Spleen (tissue), 13 donors: ENCODE measurements at regions of chr3 and their contacts with region 1.

Region 1: DNA sequence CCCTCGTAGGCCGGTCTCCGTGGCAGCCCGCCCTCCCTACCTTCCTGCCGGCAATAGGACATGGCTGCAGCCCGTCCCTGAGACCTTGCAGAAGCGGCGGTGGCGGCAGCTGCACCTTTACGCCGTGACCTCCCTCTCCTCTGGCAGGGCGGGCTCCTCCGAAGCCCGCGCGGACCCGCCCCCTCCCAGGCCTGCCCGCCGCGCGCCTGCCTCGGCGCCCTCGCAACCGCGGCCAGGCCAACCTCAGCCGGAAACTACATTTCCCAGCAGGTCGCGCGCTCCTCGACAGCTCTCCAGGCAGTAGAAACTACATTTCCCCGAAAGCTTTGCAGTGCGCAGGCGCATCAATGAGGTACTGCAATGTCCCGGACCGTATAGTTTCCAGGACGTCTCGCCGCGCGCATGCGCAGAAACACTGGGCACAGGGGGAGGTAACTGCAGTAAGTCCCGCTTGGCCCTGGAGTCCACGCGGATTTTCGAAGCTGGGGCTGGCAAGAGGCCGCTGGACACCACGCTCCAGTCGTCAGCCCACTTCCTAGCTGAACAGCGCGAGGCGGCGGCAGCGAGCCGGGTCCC is at the starts of genes CHCHD4 and TMEM43:
- DNase-seq: peak; percentile 100
- H3K4me3 ChIP-seq: peak within 1 kb of the TSS; percentile 84 to 98 (median 94)
- H3K27ac ChIP-seq: peak within 1 kb of the TSS; percentile 66 to 96 (median 92)
- H3K4me1 ChIP-seq: peaks cover 22 to 51% (median 47%) of the 10 kb centered on the region in 6 donors
- H3K27me3 ChIP-seq: no peaks in the 10 kb centered on the region
- CTCF ChIP-seq: peak in 3 of 11 experiments; percentile 12 to 26 (median 23)
- POLR2A ChIP-seq: peak in 2 of 3 donors; percentile 8 to 24
- total RNA-seq, gene CHCHD4: 8.5 to 17.1 (median 9.5) TPM
- total RNA-seq, gene TMEM43: 40.5 to 64.2 (median 53.9) TPM

Region 2: GRCh38 chr3:13470894-13471574 is 653.7 kb before region 1 on chr3:
- intact Hi-C with region 1: no loop called
- DNase-seq: peak; percentile 41
- H3K4me3 ChIP-seq: no peak overlapping the region
- H3K27ac ChIP-seq: no peak overlapping the region
- H3K4me1 ChIP-seq: no peaks in the 10 kb centered on the region
- H3K27me3 ChIP-seq: peaks cover 0 to 16% (median 4%) of the 10 kb centered on the region in 7 donors
- CTCF ChIP-seq: no peak
- POLR2A ChIP-seq: no peak

Region 3: GRCh38 chr3:13963140-13963898 is 161.4 kb before region 1 on chr3:
- intact Hi-C with region 1: no loop called
- DNase-seq: no peak
- H3K4me3 ChIP-seq: no peak overlapping the region
- H3K27ac ChIP-seq: no peak overlapping the region
- H3K4me1 ChIP-seq: no peaks in the 10 kb centered on the region
- H3K27me3 ChIP-seq: peaks cover 0 to 7% (median 0%) of the 10 kb centered on the region in 7 donors
- CTCF ChIP-seq: no peak
- POLR2A ChIP-seq: no peak

Region 4: DNA sequence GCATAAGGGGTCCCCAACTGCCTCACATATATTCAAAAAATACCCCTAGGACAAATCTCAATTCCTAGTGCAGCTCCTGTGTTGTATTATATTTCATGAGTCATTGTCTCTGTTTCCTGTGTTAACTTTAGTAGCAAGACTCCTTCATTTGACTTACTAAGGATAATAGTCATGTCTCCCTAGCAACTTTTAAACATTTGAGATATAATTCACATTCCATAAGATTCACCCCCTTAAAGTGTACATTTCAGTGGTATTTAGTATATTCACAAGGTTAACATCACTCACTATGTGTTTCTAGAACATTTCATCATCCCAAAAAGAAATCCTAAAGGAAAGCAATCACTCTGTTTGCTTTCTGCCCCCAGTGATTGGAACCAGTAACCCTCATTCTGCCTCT is 123.6 kb before region 1 on chr3:
- intact Hi-C with region 1: no loop called
- DNase-seq: no peak
- H3K4me3 ChIP-seq: no peak overlapping the region
- H3K27ac ChIP-seq: no peak overlapping the region
- H3K4me1 ChIP-seq: no peaks in the 10 kb centered on the region
- H3K27me3 ChIP-seq: peaks cover 0 to 6% (median 0%) of the 10 kb centered on the region in 7 donors
- CTCF ChIP-seq: no peak
- POLR2A ChIP-seq: no peak

Region 5: DNA sequence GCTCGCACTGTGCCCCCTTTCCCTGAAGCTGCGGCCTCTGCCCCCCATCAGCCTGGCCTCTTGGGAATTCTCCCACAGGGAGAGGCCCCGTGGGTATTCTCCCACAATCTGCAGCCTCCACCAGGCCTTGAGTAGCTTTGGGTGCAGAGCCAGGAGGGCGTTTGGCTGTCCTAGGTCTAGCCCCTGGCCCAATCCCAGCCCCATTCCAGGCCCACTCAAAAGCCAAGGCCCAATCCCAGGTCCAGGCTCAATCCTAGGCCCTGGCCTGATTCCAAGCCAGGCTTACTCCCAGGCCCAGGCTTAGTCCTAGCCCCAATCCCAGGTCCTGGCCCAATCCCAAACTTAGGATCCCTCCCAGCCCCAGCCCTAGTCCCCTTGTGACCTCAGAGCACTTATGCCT is 59.8 kb before region 1 on chr3:
- intact Hi-C with region 1: no loop called
- DNase-seq: no peak
- H3K4me3 ChIP-seq: no peak overlapping the region
- H3K27ac ChIP-seq: no peak overlapping the region
- H3K4me1 ChIP-seq: no peaks in the 10 kb centered on the region
- H3K27me3 ChIP-seq: no peaks in the 10 kb centered on the region
- CTCF ChIP-seq: no peak
- POLR2A ChIP-seq: no peak

Region 6: DNA sequence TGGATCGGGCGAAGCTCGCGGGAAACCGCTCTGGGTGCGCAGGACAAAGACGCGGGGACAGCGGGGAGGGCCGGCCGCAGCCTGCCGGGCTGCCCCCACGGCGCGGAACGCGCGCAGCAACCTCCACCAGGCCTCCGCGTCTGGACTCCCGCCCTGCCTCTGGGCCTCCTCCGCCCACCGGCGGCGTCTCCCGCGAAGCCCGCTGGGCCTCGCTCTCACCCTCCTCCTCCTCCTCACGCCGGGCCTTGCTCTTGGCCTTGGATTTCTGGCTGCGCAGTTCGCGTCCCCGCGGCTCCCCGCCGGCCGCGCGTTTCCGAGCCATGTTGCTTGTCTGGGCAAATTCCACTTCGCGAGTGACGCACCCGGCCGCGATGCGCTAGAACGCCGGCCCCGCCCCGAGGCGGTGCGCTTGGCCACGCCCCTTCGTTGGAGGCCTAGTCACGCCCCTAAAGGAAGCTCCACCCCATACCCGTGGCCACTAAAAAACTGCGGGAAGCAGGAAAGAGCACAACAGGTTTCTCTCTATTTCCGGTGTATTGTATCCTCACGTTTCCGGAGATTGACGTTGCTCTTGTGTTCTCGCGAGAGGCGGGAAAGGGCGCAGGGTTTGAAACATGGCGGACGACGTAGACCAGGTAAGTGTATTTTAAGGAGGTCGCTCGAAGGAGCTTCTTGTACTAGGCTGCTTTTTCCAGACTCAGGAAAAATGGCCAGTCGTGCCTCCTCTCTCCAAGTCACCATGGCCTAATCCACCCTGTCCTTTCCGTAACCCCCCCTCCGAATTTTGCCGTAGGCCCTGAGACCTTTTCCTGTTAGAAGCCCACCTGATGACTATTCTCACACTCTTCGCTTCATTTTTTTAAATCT is 53.8 kb after region 1 on chr3 and contains the starts of genes LSM3 and XPC:
- intact Hi-C with region 1: loop called (anchors 5 kb)
- DNase-seq: peak; percentile 99
- H3K4me3 ChIP-seq: peak within 1 kb of the TSS; percentile 62 to 90 (median 74)
- H3K27ac ChIP-seq: peak within 1 kb of the TSS; percentile 95 to 99 (median 98)
- H3K4me1 ChIP-seq: peaks cover 36 to 91% (median 60%) of the 10 kb centered on the region in 6 donors
- H3K27me3 ChIP-seq: no peaks in the 10 kb centered on the region
- CTCF ChIP-seq: peak in 5 of 11 experiments; percentile 15 to 48 (median 24)
- POLR2A ChIP-seq: peak; percentile 70 to 94 (median 80)
- total RNA-seq, gene LSM3: 7.5 to 13.2 (median 9.4) TPM
- total RNA-seq, gene XPC: 31.5 to 65.6 (median 51.3) TPM